Activated CD8-positive, alpha-beta T cell treated with anti-CD3 and anti-CD28 coated beads for 36 hours (primary cell): ENCODE measurements at regions of chr5 and their contacts with region 1.

Region 1: GRCh38 chr5:134555890-134556311 is 30.4 kb downstream of the JADE2 start:
- DNase-seq: peak; percentile 98
- ATAC-seq: peak; percentile 97
- H3K4me3 Mint-ChIP-seq: peak overlapping the region; percentile 75
- H3K27ac Mint-ChIP-seq: peak overlapping the region; percentile 99
- H3K4me1 Mint-ChIP-seq: peaks cover 46% of the 10 kb centered on the region
- H3K27me3 Mint-ChIP-seq: no peaks in the 10 kb centered on the region
- CTCF ChIP-seq: no peak

Region 2: DNA sequence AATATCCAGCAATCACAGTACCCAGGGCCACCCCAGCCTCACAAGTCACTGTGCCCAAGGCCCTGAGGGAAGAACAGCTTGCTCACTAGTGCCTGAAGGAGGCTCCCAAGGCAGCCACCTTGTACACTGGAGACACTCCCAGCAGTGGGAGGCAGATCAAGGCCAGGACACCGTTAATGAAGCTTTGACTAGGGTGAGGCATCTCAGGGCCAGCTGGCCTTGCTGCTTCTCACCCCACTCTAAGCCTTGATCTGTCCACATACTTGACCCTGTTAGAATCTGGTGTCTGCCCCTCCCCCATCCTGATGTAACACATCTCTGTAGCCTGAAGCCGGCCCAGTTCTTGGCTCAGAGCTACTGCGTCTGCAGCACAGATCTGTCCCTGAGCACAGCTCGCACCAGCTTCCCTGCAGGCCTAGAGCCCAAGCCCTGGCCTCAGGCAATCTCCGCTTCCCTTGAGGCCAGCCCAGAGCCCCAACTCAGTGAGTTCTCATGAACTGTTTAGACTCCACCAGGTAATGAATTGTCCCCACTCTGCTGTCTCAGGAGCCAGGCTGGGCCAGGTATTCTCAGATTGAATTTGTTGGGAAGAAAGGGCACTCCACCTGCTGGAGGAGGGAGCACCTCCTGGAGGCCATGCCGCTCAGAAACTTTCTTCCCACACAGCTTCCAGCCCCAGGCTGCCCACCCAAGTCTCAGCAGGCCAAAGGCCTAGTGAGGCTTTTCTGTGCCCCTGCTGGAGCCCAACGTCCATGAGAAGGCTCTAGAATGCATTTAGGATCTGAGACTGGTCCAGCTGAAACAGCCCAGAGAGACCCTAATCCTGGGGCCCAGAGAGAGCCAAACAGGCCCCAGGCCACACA is 43.9 kb before region 1 on chr5:
- CTCF ChIA-PET with region 1: no interaction called
- POLR2A ChIA-PET with region 1: no interaction called
- intact Hi-C with region 1: no loop called
- DNase-seq: peak; percentile 29
- ATAC-seq: no peak
- H3K4me3 Mint-ChIP-seq: no peak overlapping the region
- H3K27ac Mint-ChIP-seq: peak overlapping the region; percentile 62
- H3K4me1 Mint-ChIP-seq: peaks cover 40% of the 10 kb centered on the region
- H3K27me3 Mint-ChIP-seq: no peaks in the 10 kb centered on the region
- CTCF ChIP-seq: no peak

Region 3: GRCh38 chr5:134533115-134533815 is 22.6 kb before region 1 on chr5:
- CTCF ChIA-PET with region 1: interaction called, 12 read pairs
- POLR2A ChIA-PET with region 1: interaction called, 16 read pairs
- intact Hi-C with region 1: no loop called
- DNase-seq: no peak
- ATAC-seq: no peak
- H3K4me3 Mint-ChIP-seq: no peak overlapping the region
- H3K27ac Mint-ChIP-seq: peak overlapping the region; percentile 48
- H3K4me1 Mint-ChIP-seq: peaks cover 95% of the 10 kb centered on the region
- H3K27me3 Mint-ChIP-seq: no peaks in the 10 kb centered on the region
- CTCF ChIP-seq: no peak

Region 4: DNA sequence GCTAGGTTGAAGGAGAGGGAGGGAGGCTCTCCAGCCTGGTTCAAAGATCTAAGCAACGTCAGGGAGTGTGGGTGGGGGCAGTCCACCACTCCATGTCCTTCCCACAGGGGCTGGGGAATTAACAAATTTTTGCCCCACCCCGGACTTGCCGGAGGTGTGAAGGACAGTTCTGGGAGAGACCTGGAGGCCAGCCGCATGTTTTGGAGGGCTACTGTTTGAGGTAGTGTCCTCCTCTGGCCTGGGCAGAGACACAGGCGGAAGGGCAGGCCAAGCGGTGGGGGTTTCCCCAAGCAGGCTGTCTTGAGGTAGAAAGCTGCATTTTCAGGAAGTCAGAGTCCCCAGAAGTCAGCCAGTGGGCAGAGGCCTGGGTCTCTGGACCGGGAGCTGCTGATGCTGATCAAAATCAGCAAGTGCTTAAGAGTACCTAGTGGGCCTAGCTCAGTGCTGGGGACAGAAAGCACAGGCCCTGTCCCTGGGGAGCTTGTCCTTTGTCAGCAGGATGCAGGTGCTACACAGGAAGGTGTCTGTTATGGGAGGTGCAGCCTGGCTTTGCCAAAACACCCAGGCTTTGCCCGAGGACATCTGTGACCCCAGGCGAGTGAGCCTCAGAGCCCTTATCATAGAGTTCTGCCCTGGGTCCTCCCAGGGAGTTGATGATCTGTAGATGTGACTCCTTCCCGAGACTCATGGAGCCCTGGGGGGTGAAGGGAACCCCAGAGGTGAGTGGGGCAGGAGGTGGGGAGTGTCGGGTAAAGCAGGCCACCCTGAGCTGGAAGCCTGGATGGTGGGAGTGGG is 11.9 kb before region 1 on chr5:
- CTCF ChIA-PET with region 1: interaction called, 24 read pairs
- POLR2A ChIA-PET with region 1: interaction called, 15 read pairs
- intact Hi-C with region 1: no loop called
- DNase-seq: peak; percentile 76
- ATAC-seq: peak; percentile 84
- H3K4me3 Mint-ChIP-seq: peak overlapping the region; percentile 76
- H3K27ac Mint-ChIP-seq: peak overlapping the region; percentile 96
- H3K4me1 Mint-ChIP-seq: peaks cover 70% of the 10 kb centered on the region
- H3K27me3 Mint-ChIP-seq: no peaks in the 10 kb centered on the region
- CTCF ChIP-seq: no peak

Region 5: DNA sequence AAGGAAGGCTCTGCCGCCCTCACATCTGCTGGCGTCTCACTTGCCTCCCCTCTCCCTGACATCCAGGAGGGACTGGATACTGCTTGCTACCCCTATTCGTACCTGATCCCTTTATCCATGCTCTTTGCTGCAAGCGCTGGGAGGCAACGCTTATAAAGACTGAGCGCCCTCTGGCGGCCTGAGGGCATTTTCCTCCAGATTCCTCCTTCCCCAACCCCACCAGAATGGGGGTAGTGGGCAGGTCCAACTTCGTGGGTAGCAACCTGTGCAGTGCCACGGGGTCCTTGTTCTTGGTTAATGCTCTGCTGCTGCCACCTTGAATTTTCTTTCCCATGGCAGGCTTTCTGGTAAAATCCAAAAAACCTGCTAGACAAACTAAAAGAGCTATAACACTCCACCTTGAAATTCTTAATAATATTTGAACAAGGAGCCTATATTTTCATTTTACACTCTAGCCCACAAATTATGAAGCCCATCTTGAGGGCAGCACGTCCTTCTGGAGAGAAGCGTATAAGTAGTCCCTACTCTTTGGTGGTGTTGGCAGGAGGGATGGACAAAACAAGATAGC is 22.0 kb after region 1 on chr5:
- CTCF ChIA-PET with region 1: interaction called, 13 read pairs
- POLR2A ChIA-PET with region 1: no interaction called
- intact Hi-C with region 1: no loop called
- DNase-seq: peak; percentile 89
- ATAC-seq: peak; percentile 81
- H3K4me3 Mint-ChIP-seq: no peak overlapping the region
- H3K27ac Mint-ChIP-seq: peak overlapping the region; percentile 25
- H3K4me1 Mint-ChIP-seq: peaks cover 2% of the 10 kb centered on the region
- H3K27me3 Mint-ChIP-seq: no peaks in the 10 kb centered on the region
- CTCF ChIP-seq: peak; percentile 95

Region 6: DNA sequence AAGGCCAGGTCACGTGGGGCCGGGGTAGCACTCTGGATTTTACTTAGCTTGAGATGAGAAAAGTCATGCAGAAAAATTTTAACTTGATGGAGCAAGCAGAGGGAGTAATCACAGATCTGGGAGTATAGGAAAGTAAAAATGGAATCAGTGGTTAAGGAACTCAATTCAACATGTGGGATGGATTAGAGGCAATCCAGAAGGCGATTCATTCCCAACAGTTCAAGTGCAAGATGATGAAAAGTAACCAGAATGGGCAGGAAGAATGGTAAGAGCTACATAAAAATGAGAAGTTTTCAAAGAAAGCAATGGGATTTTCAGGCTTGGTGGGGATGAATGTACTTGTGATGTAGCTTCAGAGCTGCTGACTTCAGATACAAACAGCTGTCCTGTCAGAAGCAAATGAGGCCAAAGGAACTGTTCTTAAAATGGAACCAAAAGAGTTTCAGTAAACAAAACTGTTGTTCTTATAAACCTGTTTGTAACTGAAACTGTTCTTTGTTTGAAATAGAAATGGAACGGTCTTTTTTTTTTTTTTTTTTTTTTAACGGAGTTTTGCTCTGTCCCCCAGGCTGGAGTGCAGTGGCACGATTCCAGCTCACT is 87.1 kb after region 1 on chr5:
- CTCF ChIA-PET with region 1: no interaction called
- POLR2A ChIA-PET with region 1: no interaction called
- intact Hi-C with region 1: no loop called
- DNase-seq: no peak
- ATAC-seq: no peak
- H3K4me3 Mint-ChIP-seq: no peak overlapping the region
- H3K27ac Mint-ChIP-seq: no peak overlapping the region
- H3K4me1 Mint-ChIP-seq: peaks cover 8% of the 10 kb centered on the region
- H3K27me3 Mint-ChIP-seq: no peaks in the 10 kb centered on the region
- CTCF ChIP-seq: no peak